Sciatic nerve (tissue), 2 donors: ENCODE measurements at regions of chr10 and their contacts with region 1.

Region 1: DNA sequence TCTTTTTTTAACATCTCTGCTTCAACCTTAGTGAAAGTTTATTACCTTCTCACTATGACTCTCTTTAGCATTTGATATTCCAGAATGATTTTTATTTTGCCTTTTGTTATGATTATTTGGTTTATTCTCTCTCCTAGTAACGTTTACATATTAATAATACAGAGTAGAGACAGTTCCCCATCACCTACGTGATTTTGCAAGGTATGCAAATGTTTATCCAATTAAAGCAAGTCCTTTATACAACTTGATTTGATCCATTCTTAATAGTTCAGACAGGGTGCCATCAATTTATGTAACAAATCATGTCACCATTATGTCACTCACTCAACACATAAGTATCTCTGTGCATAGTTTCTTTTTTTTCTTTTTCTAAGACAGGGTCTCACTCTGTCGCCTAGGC is 26.2 kb downstream of the ECD start:
- DNase-seq: no peak
- ATAC-seq: no peak

Region 2: GRCh38 chr10:73044378-73045285 is 97.0 kb before region 1 on chr10:
- intact Hi-C with region 1: no loop called
- DNase-seq: no peak
- ATAC-seq: peak; percentile 81

Region 3: DNA sequence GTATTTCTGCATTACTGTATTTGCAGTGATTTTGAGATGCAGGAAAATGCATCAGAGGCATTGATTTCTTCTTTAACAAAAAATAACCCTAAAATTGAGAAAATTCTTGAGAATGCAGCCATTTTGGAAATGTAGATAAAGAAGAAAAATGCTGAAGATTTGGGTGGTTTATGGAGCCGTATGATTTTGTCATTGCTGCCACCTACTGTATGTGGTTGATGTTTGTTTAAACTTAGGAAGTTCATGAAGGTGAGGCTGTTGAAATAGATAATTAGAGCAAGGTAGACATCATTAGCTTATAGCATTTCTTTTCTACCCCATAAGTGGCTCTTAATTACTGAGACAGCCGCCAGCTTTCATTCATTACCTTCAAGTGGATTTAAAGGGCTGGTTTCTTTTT is 1877.8 kb after region 1 on chr10:
- intact Hi-C with region 1: loop called (anchors 5 kb)
- DNase-seq: no peak
- ATAC-seq: peak; percentile 51